ENCODE measurements at regions of chr14 and their contacts with region 1.

Region 1: DNA sequence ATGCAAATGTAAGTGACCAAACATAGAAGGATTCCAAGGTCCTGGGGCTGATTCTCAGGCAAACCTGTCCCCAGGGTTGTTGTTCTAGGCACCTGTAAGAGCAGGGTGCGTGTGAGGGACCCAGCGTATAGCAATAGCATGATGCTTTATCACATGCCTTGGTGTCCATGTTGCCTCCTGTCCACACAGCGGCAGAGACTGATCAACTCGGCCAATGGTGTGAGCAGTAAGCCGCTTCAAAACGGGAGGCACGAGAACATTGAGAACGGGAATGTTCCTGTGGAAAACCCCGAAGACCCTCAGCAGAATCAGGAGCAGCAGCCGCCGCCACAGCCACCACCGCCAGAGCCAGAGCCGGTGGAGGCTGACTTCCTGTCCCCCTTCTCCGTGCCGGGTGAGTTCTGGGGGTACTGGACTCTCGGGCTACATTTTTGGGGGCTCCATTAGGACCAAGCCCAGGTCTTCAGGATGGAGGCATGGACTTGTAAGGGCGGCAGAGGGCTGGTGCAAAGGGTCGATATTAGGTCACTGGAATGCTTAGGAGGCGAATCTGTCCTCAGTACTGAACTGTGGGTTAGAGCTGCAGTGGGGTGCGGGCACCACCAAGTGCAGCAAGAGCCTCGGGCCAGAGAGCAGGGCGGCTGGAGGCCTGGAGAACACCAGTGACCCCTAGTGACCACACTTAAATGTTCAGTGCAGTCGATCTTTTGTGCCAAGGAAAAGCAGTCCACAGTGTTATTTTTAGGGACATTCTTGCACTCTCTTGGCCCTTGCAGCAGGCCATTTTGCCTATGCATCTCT is 57.2 kb upstream of the RIN3 start:
- DNase-seq: peak; percentile 70
- ATAC-seq: peak; percentile 97
- H3K4me3 ChIP-seq: no peak overlapping the region
- H3K27ac ChIP-seq: no peak overlapping the region
- H3K4me1 ChIP-seq: peaks cover 6% of the 10 kb centered on the region
- H3K27me3 ChIP-seq: no peaks in the 10 kb centered on the region; the same call in 1 of the 2 replicates
- CTCF ChIP-seq: peak; percentile 85
- POLR2A ChIP-seq: no peak
- RAD21 ChIP-seq: peak; percentile 87

Region 2: DNA sequence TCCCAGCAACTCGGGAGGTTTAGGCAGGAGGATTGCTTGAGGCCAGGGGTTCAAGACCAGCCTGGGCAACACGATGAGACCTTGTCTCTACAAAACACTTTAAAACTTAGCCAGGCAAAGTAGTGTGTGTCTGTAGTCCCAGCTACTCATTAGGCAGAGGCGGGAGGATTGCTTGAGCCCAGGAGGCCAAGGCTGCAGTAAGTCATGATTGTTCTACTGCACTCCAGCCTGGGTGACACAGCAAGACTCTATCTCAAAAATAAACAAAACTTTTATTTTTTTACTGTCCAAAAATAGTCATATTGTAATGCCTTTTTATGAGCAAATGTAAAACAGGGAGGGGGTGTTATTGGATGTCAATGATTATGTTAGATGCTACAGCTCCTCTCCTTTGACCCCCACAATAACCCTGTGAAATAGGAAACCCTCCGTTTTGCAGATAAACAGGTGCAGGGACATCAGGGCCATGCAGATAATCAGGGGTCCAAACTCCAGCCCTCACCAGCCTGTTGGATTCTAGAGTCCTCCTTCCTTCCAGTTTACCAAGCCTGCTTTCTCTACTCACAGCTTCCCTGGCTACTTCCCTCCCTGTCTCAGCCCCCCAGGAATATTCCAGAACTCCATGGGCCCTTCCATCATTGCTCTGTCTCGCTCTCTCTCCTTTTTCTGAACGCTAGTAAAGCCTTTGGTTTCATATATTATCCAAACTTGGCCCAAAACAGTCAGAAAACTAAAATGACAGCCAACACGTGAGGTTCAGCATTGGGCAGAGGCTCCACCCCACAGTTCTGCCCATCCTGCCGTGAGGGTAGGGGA is 503.0 kb before region 1 on chr14:
- CTCF ChIA-PET with region 1: no interaction called
- POLR2A ChIA-PET with region 1: no interaction called
- dilution Hi-C with region 1: no loop called
- in situ Hi-C with region 1: no loop called
- intact Hi-C with region 1: no loop called
- DNase-seq: peak; percentile 59
- ATAC-seq: peak; percentile 68
- H3K4me3 ChIP-seq: no peak overlapping the region
- H3K27ac ChIP-seq: no peak overlapping the region
- H3K4me1 ChIP-seq: peaks cover under 1% of the 10 kb centered on the region
- H3K27me3 ChIP-seq: peaks cover 2% of the 10 kb centered on the region; the same call in 1 of the 2 replicates
- CTCF ChIP-seq: no peak
- POLR2A ChIP-seq: no peak
- RAD21 ChIP-seq: no peak

Region 3: GRCh38 chr14:92135267-92135666 is 321.1 kb before region 1 on chr14:
- CTCF ChIA-PET with region 1: interaction called, 6 read pairs
- POLR2A ChIA-PET with region 1: no interaction called
- dilution Hi-C with region 1: no loop called
- in situ Hi-C with region 1: no loop called
- intact Hi-C with region 1: loop called (anchors 1 kb)
- DNase-seq: peak; percentile 59
- ATAC-seq: peak; percentile 54; the same call in 1 of the 2 replicates
- H3K4me3 ChIP-seq: no peak overlapping the region
- H3K27ac ChIP-seq: no peak overlapping the region
- H3K4me1 ChIP-seq: no peaks in the 10 kb centered on the region
- H3K27me3 ChIP-seq: no peaks in the 10 kb centered on the region
- CTCF ChIP-seq: peak; percentile 70
- POLR2A ChIP-seq: no peak
- RAD21 ChIP-seq: peak; percentile 72

Region 4: GRCh38 chr14:92471919-92472318 is 15.5 kb after region 1 on chr14:
- CTCF ChIA-PET with region 1: interaction called, 15 read pairs
- POLR2A ChIA-PET with region 1: no interaction called
- dilution Hi-C with region 1: no loop called
- in situ Hi-C with region 1: no loop called
- intact Hi-C with region 1: no loop called
- DNase-seq: peak; percentile 93
- ATAC-seq: peak; percentile 87
- H3K4me3 ChIP-seq: no peak overlapping the region
- H3K27ac ChIP-seq: no peak overlapping the region
- H3K4me1 ChIP-seq: peaks cover 11% of the 10 kb centered on the region
- H3K27me3 ChIP-seq: no peaks in the 10 kb centered on the region
- CTCF ChIP-seq: no peak
- POLR2A ChIP-seq: no peak
- RAD21 ChIP-seq: no peak

Region 5: DNA sequence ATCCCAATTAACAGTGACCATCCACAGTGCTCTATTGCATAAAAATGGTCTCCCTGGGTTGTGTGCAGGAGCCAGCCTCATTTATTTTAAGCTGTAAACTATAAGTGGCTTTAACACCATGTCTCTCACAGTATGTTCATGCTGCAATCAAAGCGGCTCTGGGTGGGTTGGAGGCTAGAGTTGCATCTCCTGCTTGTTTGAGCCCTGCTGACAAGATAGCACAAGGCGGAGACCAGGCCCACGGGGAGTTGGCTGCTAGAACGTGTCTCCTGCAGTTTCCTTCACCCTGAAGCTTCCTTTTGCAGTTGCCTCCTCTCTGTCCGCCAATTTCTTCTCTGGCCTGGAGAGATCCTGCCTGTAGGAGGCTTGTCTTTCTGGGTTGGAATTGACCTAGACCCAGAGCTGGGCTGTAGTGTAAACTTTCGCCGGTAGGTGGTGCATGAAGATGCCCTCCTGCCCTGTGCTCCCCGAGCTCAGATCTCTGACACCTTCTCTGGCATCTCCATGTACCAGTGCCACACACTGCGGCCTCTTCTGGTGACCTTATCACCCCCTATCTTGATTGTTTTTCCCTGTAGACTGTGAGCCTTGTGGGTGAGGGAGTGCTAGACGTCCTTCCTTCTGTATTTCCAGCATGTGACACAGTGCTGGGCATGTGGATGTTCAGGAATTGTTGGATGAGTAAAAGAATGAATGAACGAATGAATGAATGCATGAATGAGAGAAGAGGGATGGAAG is 1580.1 kb after region 1 on chr14:
- CTCF ChIA-PET with region 1: no interaction called
- POLR2A ChIA-PET with region 1: no interaction called
- dilution Hi-C with region 1: no loop called
- in situ Hi-C with region 1: no loop called
- intact Hi-C with region 1: no loop called
- DNase-seq: peak; percentile 57
- ATAC-seq: peak; percentile 98
- H3K4me3 ChIP-seq: no peak overlapping the region
- H3K27ac ChIP-seq: no peak overlapping the region
- H3K4me1 ChIP-seq: peaks cover under 1% of the 10 kb centered on the region
- H3K27me3 ChIP-seq: no peaks in the 10 kb centered on the region
- CTCF ChIP-seq: peak; percentile 87
- POLR2A ChIP-seq: no peak
- RAD21 ChIP-seq: peak; percentile 75